K562 (cell line): ENCODE measurements at regions of chr17 and their contacts with region 1.

Region 1: DNA sequence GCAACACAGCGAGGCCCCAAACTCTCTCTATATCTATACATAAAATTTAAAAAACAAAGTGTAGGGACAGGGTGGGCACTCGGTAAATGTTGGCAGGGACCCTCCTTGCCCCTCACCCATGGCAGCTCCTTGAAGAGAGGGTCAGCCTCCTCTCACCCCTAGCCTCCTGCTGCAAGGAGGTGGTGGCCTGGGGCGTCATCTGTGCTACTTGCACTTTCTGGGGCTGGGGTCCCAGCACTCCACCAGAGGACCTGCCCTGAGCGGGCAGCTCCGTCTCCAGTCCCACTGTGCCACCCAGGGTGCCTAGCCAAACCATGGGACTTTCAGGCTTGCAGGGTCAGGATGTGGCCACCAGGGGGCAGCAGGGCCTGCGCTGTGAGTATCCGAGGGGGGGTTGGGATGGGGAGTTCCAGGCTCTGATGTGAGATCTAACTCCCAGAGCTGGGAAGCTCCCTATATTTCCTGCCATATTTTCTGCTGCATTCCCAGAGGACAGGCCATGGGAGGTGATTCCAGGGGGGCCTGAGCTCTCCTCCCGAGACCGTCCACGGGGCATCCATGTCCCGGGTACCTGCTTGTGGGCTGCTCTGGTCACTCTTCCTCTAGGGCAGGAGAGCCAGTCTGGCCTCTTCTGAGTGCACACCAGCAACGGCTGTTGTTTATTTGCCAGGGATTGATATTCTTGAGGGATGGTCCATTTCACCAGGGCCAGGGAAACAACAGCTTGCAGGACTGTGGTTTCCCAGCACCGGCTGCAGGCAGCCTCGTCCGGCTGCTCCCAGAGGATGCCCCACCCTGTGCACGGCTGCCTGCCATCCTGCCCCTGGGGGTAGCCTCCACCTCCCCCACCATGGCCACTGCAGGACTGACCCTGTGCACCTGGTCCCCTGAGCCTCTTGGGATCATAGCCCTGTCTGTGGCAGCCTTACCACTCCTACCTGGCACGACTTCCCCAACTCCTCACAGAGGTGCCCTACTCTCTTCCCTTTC is 1.1 kb downstream of the GPR142 start:
- DNase-seq: peak; percentile 79 to 88 (median 88)
- ATAC-seq: peak; percentile 91
- H3K4me3 ChIP-seq: no peak overlapping the region
- H3K27ac ChIP-seq: no peak overlapping the region
- H3K4me1 ChIP-seq: peaks cover 0 to 22% of the 10 kb centered on the region in 2 experiments; a peak in 1 of 5 replicates
- H3K27me3 ChIP-seq: peaks cover 24 to 50% of the 10 kb centered on the region in 2 experiments
- CTCF ChIP-seq: peak; percentile 88 to 92 (median 90)
- EP300 ChIP-seq: no peak
- POLR2A ChIP-seq: no peak
- RAD21 ChIP-seq: peak; percentile 83 to 92

Region 2: GRCh38 chr17:74332763-74333283 is 35.6 kb before region 1 on chr17:
- CTCF ChIA-PET with region 1: no interaction called
- POLR2A ChIA-PET with region 1: no interaction called
- in situ Hi-C with region 1: no loop called
- intact Hi-C with region 1: no loop called
- DNase-seq: peak; percentile 56 to 90 (median 72)
- ATAC-seq: peak; percentile 91
- H3K4me3 ChIP-seq: no peak overlapping the region
- H3K27ac ChIP-seq: peak overlapping the region; percentile 29; the same call in 1 of the 3 replicates
- H3K4me1 ChIP-seq: peaks cover 12 to 21% of the 10 kb centered on the region in 2 experiments
- H3K27me3 ChIP-seq: peaks cover 2 to 9% of the 10 kb centered on the region in 2 experiments; a peak in 3 of 5 replicates
- CTCF ChIP-seq: no peak
- EP300 ChIP-seq: peak; percentile 74
- POLR2A ChIP-seq: no peak
- RAD21 ChIP-seq: no peak

Region 3: GRCh38 chr17:74532115-74532514 is 163.7 kb after region 1 on chr17:
- CTCF ChIA-PET with region 1: interaction called, 4 read pairs
- POLR2A ChIA-PET with region 1: no interaction called
- in situ Hi-C with region 1: no loop called
- intact Hi-C with region 1: loop called (anchors 5 kb)
- DNase-seq: peak in 1 of 4 experiments; percentile 45
- ATAC-seq: peak; percentile 90
- H3K4me3 ChIP-seq: no peak overlapping the region
- H3K27ac ChIP-seq: no peak overlapping the region
- H3K4me1 ChIP-seq: no peaks in the 10 kb centered on the region; a peak in 1 of 5 replicates
- H3K27me3 ChIP-seq: peaks cover 3 to 28% of the 10 kb centered on the region in 2 experiments; a peak in 3 of 5 replicates
- CTCF ChIP-seq: no peak
- EP300 ChIP-seq: no peak
- POLR2A ChIP-seq: no peak
- RAD21 ChIP-seq: no peak